ENCODE measurements at regions of chr1 and their contacts with region 1.

Region 1: DNA sequence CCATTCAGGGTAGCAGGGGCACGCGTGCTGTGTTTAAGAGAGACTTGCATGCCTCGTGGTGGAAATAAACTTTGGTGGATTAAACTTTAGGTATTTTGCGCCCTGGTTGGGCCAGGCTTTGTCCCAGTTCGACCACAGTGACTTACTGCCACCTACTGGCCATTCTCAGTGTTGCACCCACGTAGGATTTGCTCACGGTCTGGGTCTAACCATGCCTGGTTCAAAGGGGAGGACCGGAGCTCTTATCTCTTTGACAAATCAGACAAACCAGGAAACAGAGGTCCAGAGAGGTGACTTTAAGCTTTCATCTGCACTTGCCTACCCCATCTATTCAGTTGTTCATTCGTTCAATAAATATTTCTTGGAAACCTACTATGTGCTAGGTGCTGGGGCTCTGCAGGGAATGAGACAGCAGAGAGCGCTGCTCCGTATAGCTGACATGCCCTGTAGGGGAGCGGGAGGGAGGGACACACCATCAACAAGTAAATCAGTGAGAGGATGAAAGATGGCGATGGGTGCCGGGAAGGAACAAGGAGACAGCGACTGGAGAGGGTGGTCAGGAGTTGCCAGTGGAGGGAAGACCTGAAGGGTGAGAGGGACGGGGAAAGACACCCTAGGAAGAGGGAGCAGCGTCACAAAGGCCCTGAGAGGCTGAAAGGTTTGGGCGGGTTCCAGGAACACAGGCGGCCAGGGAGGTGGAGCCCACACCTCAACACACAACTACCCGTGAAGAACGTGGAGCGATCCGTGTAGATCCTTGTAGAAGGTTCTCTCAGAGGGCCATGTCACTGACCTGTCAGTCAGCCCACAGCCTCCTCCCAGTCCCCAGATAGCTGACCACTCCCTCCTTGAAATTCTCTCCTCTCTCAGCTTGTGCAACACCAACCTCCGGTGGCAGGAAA is 27.2 kb upstream of the TINAGL1 start:
- DNase-seq: peak; percentile 86 to 90
- H3K4me3 ChIP-seq: peak overlapping the region; percentile 40
- H3K4me3 Mint-ChIP-seq: peak overlapping the region; percentile 97
- H3K27ac Mint-ChIP-seq: no peak overlapping the region
- H3K4me1 ChIP-seq: peaks cover 14% of the 10 kb centered on the region
- H3K4me1 Mint-ChIP-seq: peaks cover 12% of the 10 kb centered on the region
- H3K27me3 ChIP-seq: no peaks in the 10 kb centered on the region
- H3K27me3 Mint-ChIP-seq: no peaks in the 10 kb centered on the region
- CTCF ChIP-seq: peak; percentile 53 to 75

Region 2: GRCh38 chr1:31182352-31182751 is 366.8 kb before region 1 on chr1:
- CTCF ChIA-PET with region 1: interaction called, 10 read pairs
- POLR2A ChIA-PET with region 1: no interaction called
- intact Hi-C with region 1: loop called (anchors 1 kb)
- DNase-seq: peak; percentile 80 to 85
- H3K4me3 ChIP-seq: peak overlapping the region; percentile 34
- H3K4me3 Mint-ChIP-seq: peak overlapping the region; percentile 82
- H3K27ac Mint-ChIP-seq: no peak overlapping the region
- H3K4me1 ChIP-seq: no peaks in the 10 kb centered on the region
- H3K4me1 Mint-ChIP-seq: no peaks in the 10 kb centered on the region
- H3K27me3 ChIP-seq: no peaks in the 10 kb centered on the region
- H3K27me3 Mint-ChIP-seq: peaks cover 10% of the 10 kb centered on the region
- CTCF ChIP-seq: no peak

Region 3: GRCh38 chr1:31422505-31423319 is 126.4 kb before region 1 on chr1:
- CTCF ChIA-PET with region 1: interaction called, 19 read pairs
- POLR2A ChIA-PET with region 1: interaction called, 3 read pairs
- intact Hi-C with region 1: loop called (anchors 1 kb)
- DNase-seq: peak; percentile 70 to 77
- H3K4me3 ChIP-seq: no peak overlapping the region
- H3K4me3 Mint-ChIP-seq: no peak overlapping the region
- H3K27ac Mint-ChIP-seq: peak overlapping the region; percentile 82
- H3K4me1 ChIP-seq: peaks cover 3% of the 10 kb centered on the region; the same call in 1 of the 2 replicates
- H3K4me1 Mint-ChIP-seq: no peaks in the 10 kb centered on the region
- H3K27me3 ChIP-seq: no peaks in the 10 kb centered on the region
- H3K27me3 Mint-ChIP-seq: no peaks in the 10 kb centered on the region
- CTCF ChIP-seq: peak; percentile 71 to 78

Region 4: GRCh38 chr1:31509124-31510072 is 39.8 kb before region 1 on chr1:
- CTCF ChIA-PET with region 1: interaction called, 8 read pairs
- POLR2A ChIA-PET with region 1: interaction called, 3 read pairs
- intact Hi-C with region 1: loop called (anchors 2 kb)
- DNase-seq: peak; percentile 76 to 84
- H3K4me3 ChIP-seq: no peak overlapping the region
- H3K4me3 Mint-ChIP-seq: peak overlapping the region; percentile 11
- H3K27ac Mint-ChIP-seq: peak overlapping the region; percentile 81
- H3K4me1 ChIP-seq: peaks cover 50% of the 10 kb centered on the region
- H3K4me1 Mint-ChIP-seq: peaks cover 45% of the 10 kb centered on the region
- H3K27me3 ChIP-seq: no peaks in the 10 kb centered on the region
- H3K27me3 Mint-ChIP-seq: no peaks in the 10 kb centered on the region
- CTCF ChIP-seq: no peak

Region 5: GRCh38 chr1:31593770-31594632 is 44.8 kb after region 1 on chr1:
- CTCF ChIA-PET with region 1: interaction called, 6 read pairs
- POLR2A ChIA-PET with region 1: no interaction called
- intact Hi-C with region 1: loop called (anchors 1 kb)
- DNase-seq: peak; percentile 81 to 85
- H3K4me3 ChIP-seq: no peak overlapping the region
- H3K4me3 Mint-ChIP-seq: no peak overlapping the region
- H3K27ac Mint-ChIP-seq: no peak overlapping the region
- H3K4me1 ChIP-seq: peaks cover 21% of the 10 kb centered on the region
- H3K4me1 Mint-ChIP-seq: peaks cover 13% of the 10 kb centered on the region
- H3K27me3 ChIP-seq: no peaks in the 10 kb centered on the region
- H3K27me3 Mint-ChIP-seq: no peaks in the 10 kb centered on the region
- CTCF ChIP-seq: peak; percentile 78 to 84

Measured in Caco-2 (cell line).